ENCODE measurements at regions of chr18 and their contacts with region 1.

Region 1: DNA sequence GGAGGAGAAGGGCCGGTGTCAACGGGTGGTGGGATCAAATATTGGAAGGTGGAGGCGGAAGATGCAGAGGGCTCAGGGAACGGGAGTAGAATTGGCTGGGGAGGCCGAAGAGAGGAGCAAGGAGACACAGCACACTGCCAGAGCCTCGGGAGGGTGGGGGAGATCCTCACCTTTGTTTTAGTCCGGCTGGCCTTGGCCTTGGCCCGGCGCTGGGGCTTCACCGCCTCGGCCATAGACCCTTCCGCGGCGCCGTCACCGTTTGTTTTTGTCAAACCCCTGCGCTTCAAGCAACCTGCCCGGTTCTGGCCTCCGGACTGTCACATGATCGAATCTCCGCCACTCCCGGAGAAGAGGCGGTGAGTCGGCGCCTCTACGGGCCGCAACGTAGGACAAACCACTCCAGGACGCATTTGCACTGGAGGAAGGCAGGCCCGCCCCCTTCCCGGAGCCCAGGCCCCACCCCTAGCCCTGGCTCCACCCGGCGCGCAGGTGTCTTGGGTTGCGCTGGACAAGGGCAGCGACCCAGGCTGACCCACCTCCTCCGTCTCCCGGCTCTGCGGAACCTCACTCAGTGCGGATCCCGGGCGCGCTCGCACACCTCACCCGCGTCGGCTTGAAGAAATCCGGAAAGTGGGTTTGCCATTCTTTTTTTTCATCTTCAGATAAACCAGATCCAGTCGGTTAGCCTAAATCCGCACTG is at the start of gene EPG5:
- DNase-seq: peak; percentile 93
- H3K4me3 Mint-ChIP-seq: peak within 1 kb of the TSS; percentile 97
- H3K27ac Mint-ChIP-seq: peak within 1 kb of the TSS; percentile 91
- H3K4me1 Mint-ChIP-seq: peaks cover 38% of the 10 kb centered on the region
- H3K27me3 Mint-ChIP-seq: peaks cover 2% of the 10 kb centered on the region
- total RNA-seq, gene EPG5: 14.3 and 14.6 TPM in 2 replicates

Region 2: GRCh38 chr18:45874491-45875184 is 92.5 kb before region 1 on chr18:
- intact Hi-C with region 1: loop called (anchors 2 kb)
- DNase-seq: peak; percentile 67
- H3K4me3 Mint-ChIP-seq: peak overlapping the region; percentile 11
- H3K27ac Mint-ChIP-seq: peak overlapping the region; percentile 90
- H3K4me1 Mint-ChIP-seq: peaks cover 32% of the 10 kb centered on the region
- H3K27me3 Mint-ChIP-seq: peaks cover 2% of the 10 kb centered on the region

Region 3: DNA sequence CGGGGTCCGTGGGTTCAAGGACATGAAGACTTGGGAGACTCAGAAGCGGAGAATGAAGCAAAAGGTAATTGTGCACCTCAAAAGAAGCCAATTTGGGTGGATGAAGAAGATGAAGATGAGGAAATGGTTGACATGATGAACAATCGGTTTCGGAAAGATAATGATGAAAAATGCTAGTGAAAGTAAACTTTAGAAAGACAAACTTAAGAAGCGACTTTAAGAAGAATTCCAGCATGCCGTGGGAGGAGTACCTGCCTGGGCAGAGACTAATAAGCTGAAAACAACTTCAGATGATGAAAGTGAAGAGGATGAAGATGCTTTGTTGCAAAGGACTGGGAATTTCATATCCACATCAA is 61.4 kb after region 1 on chr18:
- intact Hi-C with region 1: loop called (anchors 1 kb)
- DNase-seq: no peak
- H3K4me3 Mint-ChIP-seq: peak overlapping the region; percentile 86
- H3K27ac Mint-ChIP-seq: peak overlapping the region; percentile 59
- H3K4me1 Mint-ChIP-seq: peaks cover 14% of the 10 kb centered on the region
- H3K27me3 Mint-ChIP-seq: peaks cover 21% of the 10 kb centered on the region

Region 4: DNA sequence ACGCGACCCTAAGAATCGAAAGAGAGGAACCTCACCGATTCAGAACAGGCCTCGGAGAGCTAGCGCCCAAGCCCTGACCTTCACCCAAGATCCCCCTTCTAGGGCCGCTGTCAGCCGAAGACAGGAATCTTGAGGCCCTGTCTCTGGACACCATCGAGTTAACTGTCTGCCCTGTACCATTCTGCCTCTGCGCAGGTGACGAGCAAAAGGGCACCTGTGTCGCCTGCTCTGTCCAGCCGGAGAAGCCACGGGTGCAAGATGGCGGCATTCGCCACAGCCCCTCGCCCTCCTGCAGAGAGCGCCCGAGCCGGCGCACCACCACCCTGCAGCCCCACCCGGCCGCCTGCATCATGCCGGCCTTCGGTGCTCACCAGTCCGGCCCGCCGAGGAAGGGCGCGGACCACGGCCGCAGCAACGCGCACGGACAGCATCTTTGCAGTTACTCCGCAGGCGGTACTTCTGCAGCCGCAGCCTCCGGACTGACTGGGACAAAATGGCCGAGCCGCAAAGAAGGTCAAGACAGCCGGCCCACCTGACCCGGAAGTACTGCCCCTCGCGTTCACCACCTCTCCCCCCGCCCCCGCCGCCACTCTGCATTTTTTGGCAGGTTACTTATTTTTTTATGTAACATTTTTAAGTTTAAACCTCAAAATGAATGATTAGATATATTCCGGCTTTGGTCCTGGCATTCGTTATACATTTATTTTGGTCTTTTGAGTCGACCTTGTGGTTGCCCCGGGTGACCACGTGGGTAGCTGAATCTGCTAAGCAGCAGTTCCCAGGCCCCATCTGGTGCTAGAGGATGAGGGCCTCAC is 130.9 kb after region 1 on chr18 and contains the start of gene ATP5F1A:
- intact Hi-C with region 1: loop called (anchors 1 kb)
- DNase-seq: peak; percentile 76
- H3K4me3 Mint-ChIP-seq: peak within 1 kb of the TSS; percentile 99
- H3K27ac Mint-ChIP-seq: peak within 1 kb of the TSS; percentile 99
- H3K4me1 Mint-ChIP-seq: peaks cover 23% of the 10 kb centered on the region
- H3K27me3 Mint-ChIP-seq: peaks cover 3% of the 10 kb centered on the region
- total RNA-seq, gene ATP5F1A: 412 and 420 TPM in 2 replicates